Left ventricle myocardium superior (tissue), 1 donor: ENCODE measurements at regions of chr7 and their contacts with region 1.

Region 1: GRCh38 chr7:98106647-98107445 is at the start of gene LMTK2:
- DNase-seq: peak; percentile 98
- ATAC-seq: peak; percentile 99
- total RNA-seq, gene LMTK2: 24.7 TPM

Region 2: GRCh38 chr7:98168181-98168905 is 61.5 kb after region 1 on chr7:
- intact Hi-C with region 1: loop called (anchors 5 kb)
- DNase-seq: peak; percentile 41
- ATAC-seq: peak; percentile 72

Region 3: DNA sequence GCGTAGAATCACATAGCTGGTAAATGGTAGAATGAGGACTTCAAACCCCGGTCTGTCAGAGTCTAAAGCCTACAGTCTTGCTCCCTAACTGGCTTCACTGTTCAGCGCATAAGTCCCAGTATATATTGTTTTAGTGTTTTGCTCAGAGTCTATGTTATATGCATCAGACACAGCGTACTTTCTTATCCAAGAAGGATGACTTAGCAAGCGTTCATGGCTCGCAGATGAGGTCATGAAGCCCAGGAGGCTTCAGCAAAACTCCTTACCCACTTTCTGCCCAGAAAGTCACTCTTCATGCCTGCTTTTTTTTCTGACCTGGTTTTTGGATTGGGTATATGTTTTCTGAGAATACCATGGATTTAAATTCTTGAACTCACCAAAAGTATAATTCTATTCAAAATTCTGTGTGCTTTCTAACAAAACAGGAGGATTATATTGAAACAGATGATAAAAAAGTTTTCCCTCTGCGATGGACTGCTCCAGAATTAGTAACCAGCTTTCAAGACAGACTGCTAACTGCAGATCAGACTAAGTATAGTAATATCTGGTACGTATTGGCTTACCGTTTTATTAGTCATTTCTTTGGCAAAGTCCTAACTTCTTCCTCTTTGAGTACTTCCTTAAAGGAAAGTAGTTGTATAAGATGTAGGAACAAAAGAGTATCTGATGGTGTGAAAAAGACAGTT is 79.7 kb after region 1 on chr7:
- intact Hi-C with region 1: no loop called
- DNase-seq: no peak
- ATAC-seq: no peak

Region 4: GRCh38 chr7:98252655-98253054 is 145.8 kb after region 1 on chr7:
- intact Hi-C with region 1: no loop called
- DNase-seq: no peak
- ATAC-seq: no peak